GM12878 (cell line): ENCODE measurements at regions of chr11 and their contacts with region 1.

Region 1: GRCh38 chr11:79708300-79708932 is 267.6 kb upstream of the TENM4 start:
- DNase-seq: peak; percentile 1
- ATAC-seq: peak; percentile 91
- H3K4me3 ChIP-seq: no peak overlapping the region
- H3K27ac ChIP-seq: no peak overlapping the region
- H3K4me1 ChIP-seq: no peaks in the 10 kb centered on the region
- H3K27me3 ChIP-seq: no peaks in the 10 kb centered on the region
- CTCF ChIP-seq: peak; percentile 44 to 78 (median 51); a peak in 4 of 6 replicates
- EP300 ChIP-seq: no peak
- POLR2A ChIP-seq: no peak
- RAD21 ChIP-seq: peak; percentile 86

Region 2: GRCh38 chr11:80155412-80156017 is 447.1 kb after region 1 on chr11:
- CTCF ChIA-PET with region 1: interaction called, 15 read pairs
- POLR2A ChIA-PET with region 1: no interaction called
- RAD21 ChIA-PET with region 1: interaction called, 5 read pairs
- SMC1A ChIA-PET with region 1: interaction called, 12 read pairs
- in situ Hi-C with region 1: loop called (anchors 10 kb)
- intact Hi-C with region 1: loop called (anchors 1 kb)
- DNase-seq: no peak
- ATAC-seq: peak; percentile 84
- H3K4me3 ChIP-seq: no peak overlapping the region
- H3K27ac ChIP-seq: no peak overlapping the region
- H3K4me1 ChIP-seq: no peaks in the 10 kb centered on the region
- H3K27me3 ChIP-seq: no peaks in the 10 kb centered on the region
- CTCF ChIP-seq: peak; percentile 50 to 52 (median 50)
- EP300 ChIP-seq: no peak
- POLR2A ChIP-seq: no peak
- RAD21 ChIP-seq: peak; percentile 50

Region 3: DNA sequence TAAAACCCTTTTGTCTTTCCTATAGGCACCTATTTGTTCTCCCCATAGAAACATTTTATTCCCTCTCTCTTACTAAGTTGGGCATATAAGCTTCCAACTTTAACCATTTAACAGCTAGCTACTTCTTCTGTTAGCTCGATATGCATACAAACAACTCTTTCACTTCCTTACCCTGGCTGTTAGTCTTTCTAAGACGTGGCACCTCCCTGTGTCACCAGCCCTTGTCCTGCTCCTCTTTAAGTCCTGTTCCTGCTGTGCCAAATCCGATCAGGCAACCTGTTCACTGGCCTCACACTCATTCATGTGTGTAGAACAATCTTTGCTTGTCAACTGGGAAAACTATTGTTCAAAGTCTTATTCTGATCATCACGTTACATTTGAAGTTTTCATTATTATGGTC is 1108.5 kb after region 1 on chr11:
- CTCF ChIA-PET with region 1: no interaction called
- POLR2A ChIA-PET with region 1: no interaction called
- RAD21 ChIA-PET with region 1: no interaction called
- SMC1A ChIA-PET with region 1: no interaction called
- in situ Hi-C with region 1: no loop called
- intact Hi-C with region 1: no loop called
- DNase-seq: peak; percentile 20
- ATAC-seq: peak; percentile 65
- H3K4me3 ChIP-seq: peak overlapping the region; percentile 46; the same call in 1 of the 2 replicates
- H3K27ac ChIP-seq: peak overlapping the region; percentile 79
- H3K4me1 ChIP-seq: peaks cover 17% of the 10 kb centered on the region
- H3K27me3 ChIP-seq: no peaks in the 10 kb centered on the region
- CTCF ChIP-seq: no peak
- EP300 ChIP-seq: no peak
- POLR2A ChIP-seq: no peak
- RAD21 ChIP-seq: no peak

Region 4: GRCh38 chr11:81005595-81005994 is 1297.2 kb after region 1 on chr11:
- CTCF ChIA-PET with region 1: interaction called, 9 read pairs
- POLR2A ChIA-PET with region 1: no interaction called
- RAD21 ChIA-PET with region 1: no interaction called
- SMC1A ChIA-PET with region 1: no interaction called
- in situ Hi-C with region 1: loop called (anchors 25 kb)
- intact Hi-C with region 1: no loop called
- DNase-seq: no peak
- ATAC-seq: peak; percentile 82
- H3K4me3 ChIP-seq: no peak overlapping the region
- H3K27ac ChIP-seq: no peak overlapping the region
- H3K4me1 ChIP-seq: no peaks in the 10 kb centered on the region
- H3K27me3 ChIP-seq: no peaks in the 10 kb centered on the region
- CTCF ChIP-seq: no peak
- EP300 ChIP-seq: no peak
- POLR2A ChIP-seq: no peak
- RAD21 ChIP-seq: no peak

Region 5: GRCh38 chr11:81237139-81237538 is 1528.7 kb after region 1 on chr11:
- CTCF ChIA-PET with region 1: interaction called, 5 read pairs
- POLR2A ChIA-PET with region 1: no interaction called
- RAD21 ChIA-PET with region 1: no interaction called
- SMC1A ChIA-PET with region 1: no interaction called
- in situ Hi-C with region 1: loop called (anchors 25 kb)
- intact Hi-C with region 1: loop called (anchors 1 kb)
- DNase-seq: no peak
- ATAC-seq: peak; percentile 81
- H3K4me3 ChIP-seq: no peak overlapping the region
- H3K27ac ChIP-seq: no peak overlapping the region
- H3K4me1 ChIP-seq: no peaks in the 10 kb centered on the region
- H3K27me3 ChIP-seq: no peaks in the 10 kb centered on the region
- CTCF ChIP-seq: peak; percentile 23 to 58 (median 29); a peak in 4 of 6 replicates
- EP300 ChIP-seq: no peak
- POLR2A ChIP-seq: no peak
- RAD21 ChIP-seq: peak; percentile 78